WTC11 (cell line): ENCODE measurements at regions of chr12 and their contacts with region 1.

Region 1: DNA sequence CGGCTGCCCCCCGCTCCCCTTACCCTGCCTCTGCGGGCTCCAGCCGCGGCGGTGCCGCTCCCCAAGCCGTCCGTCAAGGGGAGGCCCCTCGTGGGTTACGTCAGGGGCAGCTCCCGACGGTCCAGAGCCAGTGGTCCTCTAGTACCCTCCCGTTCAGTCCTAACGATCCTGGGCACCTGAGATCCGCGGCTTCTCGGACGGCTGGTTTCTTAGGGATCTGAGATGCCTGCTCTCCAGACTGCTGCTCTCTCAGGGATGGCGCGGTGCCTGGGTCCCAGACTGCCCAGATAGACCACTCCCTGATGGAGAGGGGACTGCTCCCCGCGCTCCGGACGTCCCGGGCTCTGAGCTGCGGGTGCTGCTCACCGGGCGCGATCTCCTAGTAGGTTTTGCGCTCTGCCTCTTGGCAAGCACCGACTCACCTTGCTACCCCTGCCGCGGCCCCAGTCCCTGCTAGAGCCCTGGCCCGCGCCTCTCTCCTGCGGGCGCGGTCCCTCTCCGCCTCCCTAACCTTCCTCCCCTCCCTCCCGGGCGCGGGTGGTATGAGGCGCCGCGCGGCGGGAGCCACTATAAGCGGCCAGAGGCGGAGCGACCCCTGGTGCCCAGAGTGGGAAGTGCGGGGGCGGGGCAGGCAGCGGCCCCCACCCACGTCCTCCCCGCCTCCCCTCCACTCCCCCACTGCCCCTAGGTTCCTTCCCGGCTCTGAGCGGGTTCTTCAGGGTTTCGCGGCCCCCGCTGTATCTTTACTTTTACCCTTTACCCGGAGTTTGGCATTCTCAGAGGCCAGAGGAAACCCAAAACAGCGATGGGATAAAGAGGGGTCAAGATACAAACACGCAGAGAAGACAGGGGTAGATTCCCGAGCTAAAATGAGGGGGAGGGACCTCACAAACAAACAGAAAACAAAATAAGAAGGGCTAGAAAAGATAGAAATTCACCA is at the start of gene C1QL4:
- DNase-seq: peak; percentile 93
- ATAC-seq: peak; percentile 55
- H3K4me3 Mint-ChIP-seq: peak within 1 kb of the TSS; percentile 70
- H3K27ac Mint-ChIP-seq: no peak within 1 kb of the TSS
- H3K4me1 Mint-ChIP-seq: peaks cover 56% of the 10 kb centered on the region
- H3K27me3 Mint-ChIP-seq: peaks cover 99% of the 10 kb centered on the region
- CTCF ChIP-seq: peak; percentile 97
- total RNA-seq, gene C1QL4: 0.92 to 1.2 TPM (median 1.2 TPM) in 3 replicates

Region 2: GRCh38 chr12:49174218-49174617 is 162.7 kb before region 1 on chr12:
- CTCF ChIA-PET with region 1: no interaction called
- POLR2A ChIA-PET with region 1: no interaction called
- DNase-seq: no peak
- ATAC-seq: no peak
- H3K4me3 Mint-ChIP-seq: no peak overlapping the region
- H3K27ac Mint-ChIP-seq: no peak overlapping the region
- H3K4me1 Mint-ChIP-seq: no peaks in the 10 kb centered on the region
- H3K27me3 Mint-ChIP-seq: no peaks in the 10 kb centered on the region; the same call in 1 of the 2 replicates
- CTCF ChIP-seq: no peak

Region 3: DNA sequence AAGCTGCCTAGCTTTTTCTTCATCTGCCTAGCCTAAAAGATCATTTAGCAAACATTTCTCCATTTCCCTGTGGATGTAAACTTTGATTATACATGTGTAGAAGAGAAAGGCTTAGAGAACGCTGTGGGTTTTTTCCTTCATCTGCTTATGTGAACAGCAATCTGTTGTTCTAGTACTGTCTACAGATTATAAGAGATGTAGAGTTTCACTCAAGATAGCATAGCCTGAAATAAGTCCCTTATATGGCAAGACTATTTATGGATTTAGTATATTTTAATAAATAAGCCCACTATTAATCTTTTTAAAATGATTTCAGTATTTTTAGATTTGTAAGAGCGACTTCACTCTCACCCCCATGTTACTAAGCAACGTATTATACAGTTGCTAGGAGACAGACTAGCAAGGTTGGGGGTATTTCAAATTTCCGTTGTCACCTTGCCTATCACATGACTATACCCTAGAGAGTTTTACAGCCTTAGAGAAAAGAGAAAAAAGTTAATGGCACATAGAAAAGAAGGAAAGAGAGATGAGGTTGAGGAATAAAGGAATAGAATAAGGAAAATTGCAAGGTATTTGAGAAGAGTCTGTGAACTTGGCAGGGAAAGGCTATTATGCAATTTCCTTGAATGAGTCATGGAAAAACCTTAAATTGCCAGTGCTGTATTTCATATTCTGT is 135.9 kb before region 1 on chr12:
- CTCF ChIA-PET with region 1: no interaction called
- POLR2A ChIA-PET with region 1: no interaction called
- DNase-seq: no peak
- ATAC-seq: peak; percentile 59
- H3K4me3 Mint-ChIP-seq: no peak overlapping the region
- H3K27ac Mint-ChIP-seq: peak overlapping the region; percentile 47
- H3K4me1 Mint-ChIP-seq: peaks cover 26% of the 10 kb centered on the region
- H3K27me3 Mint-ChIP-seq: no peaks in the 10 kb centered on the region
- CTCF ChIP-seq: no peak

Region 4: GRCh38 chr12:49288412-49288853 is 48.5 kb before region 1 on chr12:
- CTCF ChIA-PET with region 1: interaction called, 264 read pairs
- POLR2A ChIA-PET with region 1: interaction called, 9 read pairs
- DNase-seq: peak; percentile 76
- ATAC-seq: peak; percentile 48
- H3K4me3 Mint-ChIP-seq: no peak overlapping the region
- H3K27ac Mint-ChIP-seq: no peak overlapping the region
- H3K4me1 Mint-ChIP-seq: peaks cover 17% of the 10 kb centered on the region
- H3K27me3 Mint-ChIP-seq: peaks cover 59% of the 10 kb centered on the region
- CTCF ChIP-seq: peak; percentile 80

Region 5: GRCh38 chr12:49322708-49323523 is 14.0 kb before region 1 on chr12 and contains the start of gene TROAP:
- CTCF ChIA-PET with region 1: interaction called, 73 read pairs
- POLR2A ChIA-PET with region 1: interaction called, 19 read pairs
- DNase-seq: peak; percentile 99
- ATAC-seq: peak; percentile 99
- H3K4me3 Mint-ChIP-seq: peak within 1 kb of the TSS; percentile 99
- H3K27ac Mint-ChIP-seq: peak within 1 kb of the TSS; percentile 91
- H3K4me1 Mint-ChIP-seq: peaks cover 15% of the 10 kb centered on the region
- H3K27me3 Mint-ChIP-seq: peaks cover 15% of the 10 kb centered on the region
- CTCF ChIP-seq: no peak
- total RNA-seq, gene TROAP: 78.5 to 89.2 TPM (median 80.0 TPM) in 3 replicates

Region 6: GRCh38 chr12:49560695-49561094 is 223.8 kb after region 1 on chr12:
- CTCF ChIA-PET with region 1: no interaction called
- POLR2A ChIA-PET with region 1: no interaction called
- DNase-seq: no peak
- ATAC-seq: no peak
- H3K4me3 Mint-ChIP-seq: no peak overlapping the region
- H3K27ac Mint-ChIP-seq: no peak overlapping the region
- H3K4me1 Mint-ChIP-seq: no peaks in the 10 kb centered on the region
- H3K27me3 Mint-ChIP-seq: no peaks in the 10 kb centered on the region
- CTCF ChIP-seq: no peak

Region 7: GRCh38 chr12:49824895-49825294 is 488.0 kb after region 1 on chr12:
- CTCF ChIA-PET with region 1: no interaction called
- POLR2A ChIA-PET with region 1: no interaction called
- DNase-seq: no peak
- ATAC-seq: no peak
- H3K4me3 Mint-ChIP-seq: no peak overlapping the region
- H3K27ac Mint-ChIP-seq: peak overlapping the region; percentile 86; the same call in 1 of the 2 replicates
- H3K4me1 Mint-ChIP-seq: peaks cover 50% of the 10 kb centered on the region
- H3K27me3 Mint-ChIP-seq: no peaks in the 10 kb centered on the region
- CTCF ChIP-seq: no peak